Common myeloid progenitor, CD34-positive (primary cell): ENCODE measurements at regions of chr10 and their contacts with region 1.

Region 1: GRCh38 chr10:70880077-70880534 is 8.3 kb downstream of the PCBD1 start:
- DNase-seq: peak; percentile 82 to 91 (median 86)
- H3K4me3 ChIP-seq: no peak overlapping the region
- H3K27ac ChIP-seq: no peak overlapping the region
- H3K4me1 ChIP-seq: no peaks in the 10 kb centered on the region
- H3K27me3 ChIP-seq: no peaks in the 10 kb centered on the region

Region 2: DNA sequence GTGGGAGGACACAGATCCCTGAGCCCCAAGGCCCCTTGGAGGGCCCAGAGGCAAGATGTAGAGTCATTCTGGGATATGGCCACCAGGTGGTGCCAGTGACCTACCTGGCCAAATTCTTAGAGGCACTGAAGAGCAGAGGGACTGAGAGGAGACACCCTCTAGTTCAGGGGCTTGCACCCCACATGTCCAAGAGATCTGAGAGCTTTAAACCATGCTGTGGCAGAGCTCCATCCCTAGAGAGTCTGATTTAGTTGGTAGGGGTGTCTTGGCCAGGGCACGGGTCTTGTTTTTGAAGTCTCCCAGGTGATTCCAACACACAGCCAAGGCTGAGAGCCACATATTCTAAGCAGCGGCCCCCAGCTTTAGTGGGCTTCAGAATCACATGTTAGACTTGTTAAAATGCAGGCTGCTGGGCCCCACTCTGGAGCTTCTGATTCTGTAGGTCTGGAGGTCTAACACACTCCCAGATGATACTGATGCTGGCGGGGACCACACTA is 330.1 kb before region 1 on chr10:
- CTCF ChIA-PET with region 1: interaction called, 140 read pairs
- POLR2A ChIA-PET with region 1: no interaction called
- DNase-seq: peak; percentile 63 to 84 (median 75)
- H3K4me3 ChIP-seq: no peak overlapping the region
- H3K27ac ChIP-seq: no peak overlapping the region
- H3K4me1 ChIP-seq: no peaks in the 10 kb centered on the region
- H3K27me3 ChIP-seq: no peaks in the 10 kb centered on the region

Region 3: DNA sequence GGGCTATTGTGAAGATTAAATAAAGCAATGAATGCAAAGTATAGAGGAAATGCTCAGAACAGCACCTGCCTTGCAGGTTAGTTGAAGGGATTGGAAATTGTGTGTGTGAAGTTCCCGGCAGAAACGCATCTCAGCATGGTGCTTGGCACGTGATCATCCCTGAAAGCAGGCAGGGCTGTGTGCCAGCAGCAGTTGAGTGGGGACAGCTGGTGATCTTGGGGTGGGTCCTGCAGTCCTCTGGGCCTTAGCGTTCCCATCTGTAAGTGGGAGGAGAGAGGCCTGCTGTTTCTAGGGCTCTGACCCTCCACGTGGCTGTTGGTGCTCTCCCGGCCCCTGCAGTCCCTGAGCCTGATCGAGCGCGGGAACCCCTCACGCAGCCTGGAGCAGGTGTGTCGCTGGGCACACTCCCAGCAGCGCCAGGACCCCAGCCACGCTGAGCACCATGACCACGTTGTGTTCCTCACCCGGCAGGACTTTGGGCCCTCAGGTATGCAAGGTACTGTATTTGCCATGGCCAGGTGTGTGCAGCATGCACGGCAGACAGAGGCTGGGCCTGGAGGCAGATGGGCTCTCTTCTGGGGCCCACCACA is 150.2 kb before region 1 on chr10:
- CTCF ChIA-PET with region 1: no interaction called
- POLR2A ChIA-PET with region 1: no interaction called
- DNase-seq: no peak
- H3K4me3 ChIP-seq: no peak overlapping the region
- H3K27ac ChIP-seq: no peak overlapping the region
- H3K4me1 ChIP-seq: peaks cover 0 to 4% (median 0%) of the 10 kb centered on the region in 4 experiments
- H3K27me3 ChIP-seq: no peaks in the 10 kb centered on the region

Region 4: GRCh38 chr10:70866424-70866823 is 13.7 kb before region 1 on chr10:
- CTCF ChIA-PET with region 1: interaction called, 14 read pairs
- POLR2A ChIA-PET with region 1: no interaction called
- DNase-seq: peak in 2 of 3 donors; percentile 35 to 39
- H3K4me3 ChIP-seq: no peak overlapping the region
- H3K27ac ChIP-seq: no peak overlapping the region
- H3K4me1 ChIP-seq: peaks cover 0 to 10% (median 5%) of the 10 kb centered on the region in 4 experiments
- H3K27me3 ChIP-seq: no peaks in the 10 kb centered on the region

Region 5: GRCh38 chr10:70925377-70926225 is 45.5 kb after region 1 on chr10:
- CTCF ChIA-PET with region 1: no interaction called
- POLR2A ChIA-PET with region 1: no interaction called
- DNase-seq: peak; percentile 28 to 46 (median 43)
- H3K4me3 ChIP-seq: no peak overlapping the region
- H3K27ac ChIP-seq: no peak overlapping the region
- H3K4me1 ChIP-seq: no peaks in the 10 kb centered on the region
- H3K27me3 ChIP-seq: no peaks in the 10 kb centered on the region